ENCODE measurements at regions of chr1 and their contacts with region 1.

Region 1: DNA sequence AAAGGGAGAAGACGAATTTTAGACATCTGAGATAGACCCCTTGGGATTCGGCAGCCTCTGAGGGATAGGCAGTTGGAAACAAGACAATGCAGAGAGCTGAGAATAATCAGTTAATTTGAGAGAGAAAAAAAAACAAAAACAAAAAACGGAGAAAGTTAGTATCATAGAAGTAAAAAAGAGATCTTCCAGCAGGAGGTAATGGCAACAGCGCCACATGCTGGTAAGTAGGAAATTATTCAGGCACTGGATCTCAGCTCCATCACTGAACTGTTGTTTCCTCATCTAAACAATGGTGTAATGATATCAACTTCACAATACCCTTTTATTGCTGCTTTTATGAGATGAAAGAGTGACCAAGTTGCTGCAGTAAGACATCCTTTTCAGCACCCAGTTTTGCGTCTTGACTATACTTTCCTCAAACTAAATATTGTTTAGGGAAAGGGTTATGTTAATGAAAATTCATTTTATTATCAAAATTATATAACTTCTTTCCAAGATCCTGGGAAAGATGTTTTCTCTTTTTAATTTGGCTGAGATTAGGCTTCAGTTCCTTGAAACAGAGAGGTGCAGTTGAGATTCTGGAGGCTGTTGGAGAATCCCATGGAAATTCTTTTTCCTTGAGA is 91.4 kb upstream of the KCNA3 start:
- DNase-seq: peak; percentile 62
- ATAC-seq: peak; percentile 89
- H3K4me3 ChIP-seq: no peak overlapping the region
- H3K27ac ChIP-seq: no peak overlapping the region
- H3K4me1 ChIP-seq: no peaks in the 10 kb centered on the region
- H3K27me3 ChIP-seq: peaks cover 4% of the 10 kb centered on the region; the same call in 1 of the 2 replicates
- CTCF ChIP-seq: peak; percentile 83
- POLR2A ChIP-seq: no peak
- RAD21 ChIP-seq: peak; percentile 76

Region 2: DNA sequence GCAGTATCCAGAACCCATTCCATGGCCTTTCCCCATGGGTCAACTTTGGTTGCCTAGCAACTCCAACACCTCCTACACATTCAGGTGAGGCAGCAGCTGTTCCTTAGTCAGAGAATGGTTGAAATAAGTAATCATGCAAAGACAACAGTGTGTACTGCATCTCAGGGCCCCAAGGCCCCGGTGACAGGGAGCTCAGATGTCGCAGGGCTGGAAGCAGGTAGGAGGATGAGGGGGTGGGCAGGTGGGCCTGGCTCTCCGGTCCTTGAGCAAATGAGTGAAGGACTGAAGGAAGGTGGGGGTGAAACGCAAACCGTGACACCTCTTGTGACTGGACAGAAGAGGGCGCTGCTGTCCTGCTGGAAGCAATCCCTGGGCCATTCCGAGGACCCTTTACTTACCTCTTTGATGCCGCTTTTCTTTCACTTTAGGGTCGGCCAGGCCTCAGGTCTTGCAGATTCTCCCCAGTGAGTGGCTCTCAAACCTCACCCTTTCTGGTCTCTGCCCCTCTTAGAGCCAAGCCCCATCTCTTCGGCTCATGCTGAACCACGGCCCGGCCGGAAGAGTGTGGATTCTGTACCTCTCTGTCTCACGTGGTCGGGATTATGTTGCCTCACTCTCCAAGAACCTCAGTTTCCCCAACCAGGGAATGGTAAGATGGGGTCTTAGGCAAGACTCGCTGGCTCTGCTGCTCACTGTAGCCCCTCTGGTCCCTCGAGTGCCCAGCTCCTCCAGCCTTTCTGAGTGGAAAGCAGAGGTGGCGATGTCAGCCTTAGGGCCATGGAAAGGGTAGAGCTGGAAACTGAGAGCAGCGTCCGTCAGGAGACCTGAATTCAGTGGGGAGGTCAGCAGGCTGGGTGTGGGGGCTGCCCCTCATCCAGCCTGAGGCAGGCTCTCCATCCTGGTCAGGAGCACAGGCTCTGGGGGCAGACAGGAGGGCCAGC is 241.6 kb before region 1 on chr1:
- CTCF ChIA-PET with region 1: no interaction called
- POLR2A ChIA-PET with region 1: no interaction called
- dilution Hi-C with region 1: no loop called
- in situ Hi-C with region 1: loop called (anchors 10 kb)
- intact Hi-C with region 1: loop called (anchors 2 kb)
- DNase-seq: peak; percentile 30
- ATAC-seq: peak; percentile 65
- H3K4me3 ChIP-seq: no peak overlapping the region
- H3K27ac ChIP-seq: no peak overlapping the region
- H3K4me1 ChIP-seq: no peaks in the 10 kb centered on the region
- H3K27me3 ChIP-seq: peaks cover 42% of the 10 kb centered on the region
- CTCF ChIP-seq: peak; percentile 56
- POLR2A ChIP-seq: no peak
- RAD21 ChIP-seq: peak; percentile 62

Region 3: DNA sequence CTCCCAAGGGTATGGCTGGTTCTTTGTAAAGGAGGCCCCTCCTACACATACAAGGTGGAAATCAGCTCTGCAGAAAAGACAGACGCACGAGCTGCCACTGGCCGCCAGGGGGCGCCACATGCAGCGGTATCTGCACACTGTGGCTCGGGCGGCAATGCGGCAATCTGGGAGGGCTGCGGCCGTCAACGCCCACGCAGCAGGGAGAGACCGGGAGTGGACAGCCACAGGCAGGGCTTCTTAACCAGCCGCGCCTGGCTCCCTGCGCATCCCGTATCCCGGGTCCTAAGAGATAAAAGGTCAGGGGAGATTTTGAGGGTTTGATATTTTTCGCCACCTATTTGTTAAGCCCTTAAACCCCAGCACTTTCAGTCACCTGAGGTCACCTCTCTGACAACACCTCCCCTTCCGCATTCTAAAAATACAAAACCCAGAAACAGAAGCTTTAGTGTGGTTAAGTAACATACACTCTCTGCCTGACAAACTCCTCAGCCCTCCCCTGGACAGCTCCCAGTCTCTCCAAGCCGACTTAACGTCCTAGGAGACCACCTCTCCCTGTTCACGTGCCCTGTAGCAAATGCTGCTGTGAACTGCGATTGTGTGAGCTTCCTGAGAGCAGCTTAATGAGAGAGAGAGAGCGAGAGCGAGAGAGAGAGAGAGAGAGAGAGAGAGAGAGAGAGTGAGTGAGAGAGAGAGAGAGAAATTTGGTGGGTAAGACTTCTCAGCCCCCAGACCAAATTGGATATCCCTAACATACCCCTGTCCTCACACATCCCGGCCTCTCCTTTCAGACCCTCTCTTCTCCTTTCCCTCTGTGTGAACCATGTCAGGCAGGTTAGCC is 146.5 kb before region 1 on chr1:
- CTCF ChIA-PET with region 1: interaction called, 6 read pairs
- POLR2A ChIA-PET with region 1: no interaction called
- dilution Hi-C with region 1: no loop called
- in situ Hi-C with region 1: no loop called
- intact Hi-C with region 1: loop called (anchors 1 kb)
- DNase-seq: peak; percentile 59
- ATAC-seq: peak; percentile 91
- H3K4me3 ChIP-seq: no peak overlapping the region
- H3K27ac ChIP-seq: no peak overlapping the region
- H3K4me1 ChIP-seq: no peaks in the 10 kb centered on the region
- H3K27me3 ChIP-seq: peaks cover 19% of the 10 kb centered on the region
- CTCF ChIP-seq: peak; percentile 75
- POLR2A ChIP-seq: no peak
- RAD21 ChIP-seq: peak; percentile 54

Region 4: DNA sequence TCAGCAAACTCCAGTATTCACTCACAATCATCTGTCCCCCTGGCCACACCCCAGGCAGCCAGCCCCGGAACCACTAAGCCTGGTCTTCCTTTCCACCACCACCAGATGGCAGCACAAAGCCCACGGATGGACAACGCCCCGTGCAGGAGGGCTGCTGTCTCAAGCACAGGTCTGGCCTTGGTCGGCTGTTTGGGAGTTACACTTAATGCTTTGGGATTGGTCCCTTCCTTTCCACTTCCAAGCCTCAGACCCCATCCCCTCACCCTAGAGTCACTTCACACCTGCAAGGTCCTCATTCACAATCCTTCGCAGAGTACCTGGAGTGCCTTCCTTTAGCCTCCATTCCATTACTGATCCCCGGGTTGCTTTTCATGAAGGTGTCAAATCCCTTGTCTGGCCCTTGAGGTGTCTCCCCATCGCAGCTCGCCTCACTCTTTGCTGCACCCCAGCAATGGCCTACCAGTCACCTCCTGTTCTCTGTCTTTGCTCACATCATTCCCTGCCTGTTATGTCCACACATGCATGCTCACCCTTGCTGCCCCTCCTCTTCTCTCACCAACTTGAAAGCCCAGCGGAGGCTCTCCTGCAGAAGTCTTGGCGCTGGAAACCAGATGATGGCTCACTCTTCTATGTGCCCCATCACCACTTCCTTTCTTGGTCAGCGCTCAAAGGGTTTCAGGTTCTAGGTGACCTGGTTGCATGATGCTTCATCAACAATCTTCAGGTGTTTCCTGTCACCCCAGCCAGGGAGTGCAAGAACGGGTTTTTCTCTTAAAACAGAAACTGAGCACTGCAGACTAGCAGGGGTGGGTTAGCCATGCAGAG is 135.1 kb before region 1 on chr1:
- CTCF ChIA-PET with region 1: no interaction called
- POLR2A ChIA-PET with region 1: no interaction called
- dilution Hi-C with region 1: no loop called
- in situ Hi-C with region 1: loop called (anchors 5 kb)
- intact Hi-C with region 1: loop called (anchors 1 kb)
- DNase-seq: peak; percentile 46
- ATAC-seq: peak; percentile 96
- H3K4me3 ChIP-seq: no peak overlapping the region
- H3K27ac ChIP-seq: no peak overlapping the region
- H3K4me1 ChIP-seq: peaks cover 3% of the 10 kb centered on the region; the same call in 1 of the 2 replicates
- H3K27me3 ChIP-seq: peaks cover 10% of the 10 kb centered on the region
- CTCF ChIP-seq: peak; percentile 72
- POLR2A ChIP-seq: no peak
- RAD21 ChIP-seq: peak; percentile 65

Region 5: GRCh38 chr1:110780600-110781484 is 14.7 kb after region 1 on chr1:
- CTCF ChIA-PET with region 1: interaction called, 16 read pairs
- POLR2A ChIA-PET with region 1: no interaction called
- dilution Hi-C with region 1: no loop called
- in situ Hi-C with region 1: no loop called
- intact Hi-C with region 1: no loop called
- DNase-seq: peak; percentile 65
- ATAC-seq: peak; percentile 65
- H3K4me3 ChIP-seq: no peak overlapping the region
- H3K27ac ChIP-seq: no peak overlapping the region
- H3K4me1 ChIP-seq: no peaks in the 10 kb centered on the region
- H3K27me3 ChIP-seq: peaks cover 7% of the 10 kb centered on the region; the same call in 1 of the 2 replicates
- CTCF ChIP-seq: peak; percentile 66
- POLR2A ChIP-seq: no peak
- RAD21 ChIP-seq: peak; percentile 52

Measured in IMR-90 (cell line).